Pancreas (tissue), 10 donors: ENCODE measurements at regions of chr13 and their contacts with region 1.

Region 1: DNA sequence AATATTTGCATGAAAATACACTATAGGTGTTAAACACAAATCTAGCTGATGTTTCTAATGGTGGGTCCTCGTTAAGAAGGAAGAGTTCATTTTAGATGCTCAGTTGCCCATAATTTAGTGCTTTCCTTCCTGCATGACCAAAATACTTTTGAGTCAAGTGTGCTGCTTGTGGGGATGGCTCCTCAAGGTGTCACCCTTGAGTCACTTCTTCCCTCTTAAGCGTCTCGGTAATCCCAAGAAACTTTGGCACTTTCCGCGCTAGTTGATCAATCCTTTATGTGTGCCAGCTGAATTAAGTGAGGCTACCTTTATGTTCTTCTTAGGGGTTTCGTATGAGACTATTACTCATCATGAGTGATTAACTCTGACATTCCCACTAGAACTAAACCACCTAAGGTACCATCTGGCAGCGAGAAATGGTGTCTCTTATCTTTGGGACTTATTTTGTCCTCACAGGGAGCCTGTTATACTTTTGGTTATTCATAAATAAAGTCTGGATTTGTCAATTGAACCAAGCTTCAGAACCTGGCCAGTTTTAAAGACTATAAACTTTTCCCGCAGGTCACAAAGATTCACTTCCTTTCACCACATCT is 106.8 kb downstream of the NHLRC3 start:
- DNase-seq: peak in 4 of 6 donors; percentile 24 to 58 (median 32)
- ATAC-seq: peak; percentile 67 to 90 (median 83)
- H3K4me3 ChIP-seq: no peak overlapping the region
- H3K27ac ChIP-seq: no peak overlapping the region
- H3K4me1 ChIP-seq: no peaks in the 10 kb centered on the region
- H3K27me3 ChIP-seq: peaks cover 0 to 6% (median 0%) of the 10 kb centered on the region in 4 donors
- CTCF ChIP-seq: peak in 3 of 4 donors; percentile 43 to 56 (median 52)

Region 2: DNA sequence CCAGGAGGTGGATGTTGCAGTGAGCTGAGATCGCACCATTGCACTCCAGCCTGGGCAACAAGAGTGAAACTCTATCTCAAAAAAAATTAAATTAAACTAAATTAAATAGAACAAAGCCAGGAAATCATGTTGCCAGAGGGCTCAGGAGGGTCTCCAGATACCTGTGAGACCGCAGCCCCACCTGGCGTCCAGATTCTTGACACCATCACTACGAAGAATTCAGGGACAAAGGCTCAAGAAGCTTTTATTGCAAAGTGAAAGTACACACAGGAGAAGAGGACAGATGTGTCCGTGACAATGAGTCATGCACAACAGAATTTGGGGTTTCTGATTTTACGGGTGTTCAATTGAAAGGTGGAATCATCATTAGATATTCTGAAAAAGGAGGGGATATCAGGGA is 231.0 kb before region 1 on chr13:
- intact Hi-C with region 1: no loop called
- DNase-seq: no peak
- ATAC-seq: peak in 2 of 4 donors; percentile 21 to 44
- H3K4me3 ChIP-seq: no peak overlapping the region
- H3K27ac ChIP-seq: no peak overlapping the region
- H3K4me1 ChIP-seq: peaks cover 0 to 5% (median 0%) of the 10 kb centered on the region in 3 donors
- H3K27me3 ChIP-seq: no peaks in the 10 kb centered on the region
- CTCF ChIP-seq: no peak

Region 3: DNA sequence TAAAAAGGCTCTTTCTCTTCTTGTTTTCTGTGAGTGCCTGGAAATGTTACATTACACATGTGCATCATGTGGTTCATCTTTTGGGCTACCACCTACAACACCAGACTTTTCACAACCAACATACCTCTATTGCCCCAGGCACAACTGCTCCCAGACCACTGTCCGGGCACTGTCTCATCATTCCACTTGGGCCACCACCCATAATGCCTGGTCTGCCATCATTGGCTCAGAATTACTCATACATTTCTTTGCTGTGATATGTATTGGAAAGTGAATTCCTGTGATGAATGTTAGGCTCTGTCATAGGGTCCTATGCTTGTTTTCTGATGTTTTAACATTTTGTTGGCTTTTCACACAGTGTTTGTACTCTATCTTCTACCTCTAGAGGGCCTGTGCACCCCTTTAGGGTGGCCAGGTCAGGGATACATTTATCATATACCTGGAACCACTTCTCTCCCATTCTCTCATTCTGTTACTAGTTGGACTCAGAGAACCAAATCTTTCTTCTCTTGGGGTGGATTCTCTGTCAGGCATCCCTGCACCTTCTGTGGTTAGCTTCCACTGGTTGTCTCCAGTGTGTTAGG is 66.0 kb after region 1 on chr13:
- intact Hi-C with region 1: no loop called
- DNase-seq: no peak
- ATAC-seq: no peak
- H3K4me3 ChIP-seq: no peak overlapping the region
- H3K27ac ChIP-seq: no peak overlapping the region
- H3K4me1 ChIP-seq: no peaks in the 10 kb centered on the region
- H3K27me3 ChIP-seq: peaks cover 0 to 5% (median 0%) of the 10 kb centered on the region in 4 donors
- CTCF ChIP-seq: no peak

Region 4: DNA sequence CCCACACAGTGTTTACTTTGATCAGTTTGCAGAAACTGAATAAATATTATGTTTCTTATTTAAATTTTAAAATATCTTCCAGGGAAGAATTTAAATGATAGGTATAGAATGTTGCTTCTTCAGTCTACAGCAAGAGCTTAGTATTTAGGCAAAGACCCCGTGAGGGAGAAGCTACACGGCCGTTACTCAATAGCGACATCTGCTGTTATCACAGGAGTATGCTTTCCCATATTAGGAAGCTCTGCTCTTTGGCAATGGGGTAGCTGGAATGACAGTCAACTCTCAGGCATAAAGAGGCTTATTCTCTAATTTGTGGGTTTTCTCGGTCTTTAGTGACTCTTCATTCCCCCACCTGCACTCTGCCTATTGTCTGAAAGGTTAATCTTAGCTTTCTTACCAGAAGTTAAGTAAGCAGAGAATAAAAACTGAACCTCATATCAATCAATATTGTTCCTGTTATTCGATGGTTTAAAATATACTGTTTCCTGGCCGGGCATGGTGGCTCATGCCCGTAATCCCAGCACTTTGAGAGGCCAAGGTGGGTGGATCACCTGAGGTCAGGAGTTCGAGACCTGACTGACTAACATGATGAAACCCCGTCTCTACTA is 471.2 kb after region 1 on chr13:
- intact Hi-C with region 1: loop called in 2 of 3 experiments (anchors 5 to 10 kb)
- DNase-seq: peak in 3 of 6 donors; percentile 18 to 33 (median 32)
- ATAC-seq: peak; percentile 68 to 97 (median 88)
- H3K4me3 ChIP-seq: no peak overlapping the region
- H3K27ac ChIP-seq: no peak overlapping the region
- H3K4me1 ChIP-seq: no peaks in the 10 kb centered on the region
- H3K27me3 ChIP-seq: peaks cover 0 to 3% (median 0%) of the 10 kb centered on the region in 4 donors
- CTCF ChIP-seq: peak; percentile 52 to 81 (median 71)